SK-N-SH (cell line): ENCODE measurements at regions of chr17 and their contacts with region 1.

Region 1: DNA sequence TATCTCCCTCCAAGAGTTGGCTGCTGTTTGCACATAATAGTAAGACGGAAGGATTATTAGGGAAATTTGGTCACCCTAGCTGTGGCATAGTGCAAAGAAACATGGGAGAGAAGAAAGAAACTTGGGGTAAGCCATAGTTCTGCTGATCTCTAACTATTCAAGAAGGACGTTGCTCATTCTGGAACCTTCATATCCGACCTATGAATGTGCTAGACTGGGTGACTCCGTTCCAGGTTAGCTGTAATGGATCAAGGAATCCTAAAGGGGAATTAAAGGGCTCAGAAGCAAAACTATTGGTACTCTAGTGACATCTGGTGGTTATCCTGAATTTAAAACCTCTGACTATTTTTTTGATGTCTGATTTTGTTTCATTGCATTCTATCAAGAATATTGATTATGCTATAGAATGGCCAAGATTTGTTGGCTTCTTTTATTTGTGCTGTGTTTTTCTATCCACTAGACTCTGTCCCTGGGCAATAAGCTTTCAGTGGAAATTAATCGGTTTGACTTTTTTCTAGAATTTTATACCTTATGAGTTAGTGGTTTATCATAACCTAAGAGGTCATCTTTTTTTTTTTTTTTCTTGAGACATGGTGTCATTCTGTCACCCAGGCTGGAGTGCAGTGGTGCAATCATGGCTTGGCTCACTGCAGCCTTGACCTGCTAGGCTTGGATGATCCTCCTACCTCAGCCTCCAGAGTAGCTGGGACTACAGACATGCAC is 19.5 kb downstream of the PCTP start:
- DNase-seq: peak; percentile 73
- H3K4me3 ChIP-seq: no peak overlapping the region; a peak in 1 of 4 replicates
- H3K27ac ChIP-seq: no peak overlapping the region
- H3K4me1 ChIP-seq: peaks cover 8 to 9% of the 10 kb centered on the region in 2 experiments
- H3K27me3 ChIP-seq: no peaks in the 10 kb centered on the region
- CTCF ChIP-seq: peak; percentile 85
- EP300 ChIP-seq: no peak
- RAD21 ChIP-seq: peak; percentile 94

Region 2: GRCh38 chr17:55513885-55514591 is 256.3 kb before region 1 on chr17:
- CTCF ChIA-PET with region 1: interaction called, 14 read pairs
- POLR2A ChIA-PET with region 1: no interaction called
- DNase-seq: peak; percentile 73
- H3K4me3 ChIP-seq: peak overlapping the region in 1 of 2 experiments; percentile 13; a peak in 1 of 4 replicates
- H3K27ac ChIP-seq: no peak overlapping the region
- H3K4me1 ChIP-seq: peaks cover 0 to 4% of the 10 kb centered on the region in 2 experiments; a peak in 2 of 4 replicates
- H3K27me3 ChIP-seq: peaks cover 19% of the 10 kb centered on the region; the same call in 1 of the 2 replicates
- CTCF ChIP-seq: peak; percentile 100
- EP300 ChIP-seq: no peak; a peak in 1 of 4 replicates
- RAD21 ChIP-seq: peak; percentile 99

Region 3: DNA sequence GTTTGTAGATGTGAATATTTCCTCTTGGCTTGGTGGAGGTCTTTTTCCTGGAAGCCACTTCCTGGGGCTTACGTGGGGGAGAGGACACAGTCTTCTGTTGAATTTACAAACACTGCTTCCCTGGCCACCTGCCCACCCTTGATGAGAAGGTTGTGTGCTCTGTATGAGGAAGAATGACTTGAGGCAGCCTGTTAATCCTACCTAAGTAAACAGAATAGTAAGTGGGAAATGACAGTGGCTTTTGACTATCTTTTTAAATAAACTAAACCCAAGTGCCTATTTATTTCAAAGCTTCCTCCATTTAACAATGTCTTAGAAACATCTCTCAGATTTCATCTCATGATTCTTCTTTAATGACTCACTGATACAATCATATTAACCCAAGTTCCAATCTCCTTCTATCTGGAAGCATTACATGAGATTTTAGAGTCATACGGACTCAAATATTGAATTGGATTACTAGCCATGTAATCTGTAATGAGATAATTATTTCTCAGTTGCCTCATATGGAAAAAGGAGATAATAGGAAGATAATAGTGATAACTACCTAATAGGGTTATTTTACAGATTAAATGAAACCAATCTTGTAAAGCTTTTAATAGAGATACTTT is 162.5 kb before region 1 on chr17:
- CTCF ChIA-PET with region 1: interaction called, 10 read pairs
- POLR2A ChIA-PET with region 1: no interaction called
- DNase-seq: no peak
- H3K4me3 ChIP-seq: no peak overlapping the region
- H3K27ac ChIP-seq: no peak overlapping the region
- H3K4me1 ChIP-seq: peaks cover 7 to 10% of the 10 kb centered on the region in 2 experiments; a peak in 3 of 4 replicates
- H3K27me3 ChIP-seq: no peaks in the 10 kb centered on the region
- CTCF ChIP-seq: no peak
- EP300 ChIP-seq: peak in 1 of 2 experiments; percentile 45; a peak in 1 of 4 replicates
- RAD21 ChIP-seq: no peak

Region 4: GRCh38 chr17:55668312-55668920 is 101.9 kb before region 1 on chr17:
- CTCF ChIA-PET with region 1: interaction called, 11 read pairs
- POLR2A ChIA-PET with region 1: no interaction called
- DNase-seq: no peak
- H3K4me3 ChIP-seq: no peak overlapping the region
- H3K27ac ChIP-seq: no peak overlapping the region
- H3K4me1 ChIP-seq: peaks cover 0 to 8% of the 10 kb centered on the region in 2 experiments; a peak in 2 of 4 replicates
- H3K27me3 ChIP-seq: no peaks in the 10 kb centered on the region
- CTCF ChIP-seq: no peak
- EP300 ChIP-seq: no peak
- RAD21 ChIP-seq: no peak

Region 5: GRCh38 chr17:55717898-55718735 is 52.2 kb before region 1 on chr17:
- CTCF ChIA-PET with region 1: interaction called, 162 read pairs
- POLR2A ChIA-PET with region 1: no interaction called
- DNase-seq: peak; percentile 54
- H3K4me3 ChIP-seq: no peak overlapping the region; a peak in 1 of 4 replicates
- H3K27ac ChIP-seq: peak overlapping the region in 1 of 2 experiments; percentile 13; a peak in 1 of 4 replicates
- H3K4me1 ChIP-seq: peaks cover 2 to 8% of the 10 kb centered on the region in 2 experiments; a peak in 2 of 4 replicates
- H3K27me3 ChIP-seq: no peaks in the 10 kb centered on the region
- CTCF ChIP-seq: peak; percentile 99
- EP300 ChIP-seq: no peak
- RAD21 ChIP-seq: peak; percentile 97

Region 6: GRCh38 chr17:55783684-55784245 is 13.5 kb after region 1 on chr17:
- CTCF ChIA-PET with region 1: interaction called, 68 read pairs
- POLR2A ChIA-PET with region 1: no interaction called
- DNase-seq: peak; percentile 38
- H3K4me3 ChIP-seq: no peak overlapping the region
- H3K27ac ChIP-seq: no peak overlapping the region
- H3K4me1 ChIP-seq: peaks cover 0 to 6% of the 10 kb centered on the region in 2 experiments; a peak in 1 of 4 replicates
- H3K27me3 ChIP-seq: no peaks in the 10 kb centered on the region
- CTCF ChIP-seq: no peak
- EP300 ChIP-seq: no peak
- RAD21 ChIP-seq: no peak